ENCODE measurements at regions of chr22 and their contacts with region 1.

Region 1: GRCh38 chr22:29553351-29554224 is at the start of gene THOC5:
- DNase-seq: peak; percentile 93
- H3K4me3 Mint-ChIP-seq: peak within 1 kb of the TSS; percentile 97
- H3K27ac Mint-ChIP-seq: peak within 1 kb of the TSS; percentile 80
- H3K4me1 Mint-ChIP-seq: peaks cover 25% of the 10 kb centered on the region
- H3K27me3 Mint-ChIP-seq: no peaks in the 10 kb centered on the region
- total RNA-seq, gene THOC5: 54.8 to 55.1 TPM

Region 2: GRCh38 chr22:29040385-29041275 is 513.0 kb before region 1 on chr22:
- CTCF ChIA-PET with region 1: no interaction called
- intact Hi-C with region 1: no loop called
- DNase-seq: peak; percentile 80
- H3K4me3 Mint-ChIP-seq: no peak overlapping the region
- H3K27ac Mint-ChIP-seq: no peak overlapping the region
- H3K4me1 Mint-ChIP-seq: no peaks in the 10 kb centered on the region
- H3K27me3 Mint-ChIP-seq: peaks cover 2% of the 10 kb centered on the region

Region 3: DNA sequence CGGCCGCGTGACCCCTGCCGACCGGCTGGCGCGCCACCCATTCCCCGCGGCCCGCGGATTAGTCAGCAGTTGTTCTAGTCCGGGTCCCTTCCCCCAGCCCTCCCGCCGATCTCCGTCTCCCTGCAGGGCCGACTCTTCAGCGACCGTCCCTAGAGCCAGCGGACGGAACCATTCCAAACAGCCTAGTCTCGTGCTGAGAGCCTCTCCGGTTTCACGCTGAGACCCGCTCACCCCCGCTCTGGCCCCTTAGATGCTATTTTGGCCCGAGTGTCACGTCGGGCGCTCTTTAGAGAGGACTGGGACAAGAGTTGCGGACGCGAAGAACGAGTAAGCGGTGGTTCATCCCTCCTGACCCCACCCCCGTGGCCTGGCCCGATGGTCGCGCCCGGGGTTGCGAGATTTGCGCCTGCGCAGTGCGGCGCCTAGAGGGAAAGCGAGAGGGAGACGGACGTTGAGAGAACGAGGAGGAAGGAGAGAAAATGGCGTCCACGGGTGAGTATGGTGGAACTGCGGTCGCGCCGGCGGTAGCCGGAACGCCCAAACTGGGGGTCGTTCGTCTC is 285.6 kb before region 1 on chr22 and contains the starts of genes EWSR1 and RHBDD3:
- CTCF ChIA-PET with region 1: interaction called, 3 read pairs
- intact Hi-C with region 1: loop called (anchors 2 kb)
- DNase-seq: peak; percentile 94
- H3K4me3 Mint-ChIP-seq: peak within 1 kb of the TSS; percentile 99
- H3K27ac Mint-ChIP-seq: peak within 1 kb of the TSS; percentile 100
- H3K4me1 Mint-ChIP-seq: peaks cover 39% of the 10 kb centered on the region
- H3K27me3 Mint-ChIP-seq: no peaks in the 10 kb centered on the region
- total RNA-seq, gene EWSR1: 274 to 303 TPM
- total RNA-seq, gene RHBDD3: 17.6 to 20.5 TPM

Region 4: DNA sequence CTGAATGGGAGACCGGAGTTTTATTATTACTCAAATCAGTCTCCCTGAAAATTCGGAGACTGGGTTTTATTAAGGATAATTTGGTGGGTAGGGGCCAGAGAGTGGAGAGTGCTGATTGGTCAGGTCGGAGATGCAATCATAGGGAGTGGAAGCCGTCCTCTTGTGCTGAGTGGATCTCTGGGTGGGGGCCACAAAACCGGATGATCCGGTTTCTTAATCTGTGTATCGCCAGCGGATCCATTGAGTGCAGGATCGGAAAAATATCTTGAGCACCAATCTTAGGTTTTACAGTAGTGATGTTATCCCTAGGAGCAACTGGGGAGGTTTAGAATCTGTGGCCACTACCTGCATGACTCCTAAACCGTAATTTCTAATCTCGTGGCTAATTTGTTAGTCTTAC is 28.2 kb after region 1 on chr22:
- CTCF ChIA-PET with region 1: no interaction called
- intact Hi-C with region 1: loop called (anchors 1 kb)
- DNase-seq: no peak
- H3K4me3 Mint-ChIP-seq: peak overlapping the region; percentile 92
- H3K27ac Mint-ChIP-seq: no peak overlapping the region
- H3K4me1 Mint-ChIP-seq: peaks cover 17% of the 10 kb centered on the region
- H3K27me3 Mint-ChIP-seq: no peaks in the 10 kb centered on the region

Measured in activated naive CD4-positive, alpha-beta T cell treated with anti-CD3 and anti-CD28 coated beads for 36 hours (primary cell).